ENCODE measurements at regions of chr4 and their contacts with region 1.

Region 1: GRCh38 chr4:107757864-107758476 is 37.9 kb upstream of the PAPSS1 start:
- DNase-seq: no peak
- ATAC-seq: peak in 1 of 8 donors; percentile 42
- H3K4me3 ChIP-seq: no peak overlapping the region
- H3K27ac ChIP-seq: no peak overlapping the region
- H3K4me1 ChIP-seq: peaks cover 0 to 10% (median 0%) of the 10 kb centered on the region in 9 donors
- H3K27me3 ChIP-seq: no peaks in the 10 kb centered on the region
- CTCF ChIP-seq: peak in 8 of 9 donors; percentile 42 to 75 (median 58)

Region 2: DNA sequence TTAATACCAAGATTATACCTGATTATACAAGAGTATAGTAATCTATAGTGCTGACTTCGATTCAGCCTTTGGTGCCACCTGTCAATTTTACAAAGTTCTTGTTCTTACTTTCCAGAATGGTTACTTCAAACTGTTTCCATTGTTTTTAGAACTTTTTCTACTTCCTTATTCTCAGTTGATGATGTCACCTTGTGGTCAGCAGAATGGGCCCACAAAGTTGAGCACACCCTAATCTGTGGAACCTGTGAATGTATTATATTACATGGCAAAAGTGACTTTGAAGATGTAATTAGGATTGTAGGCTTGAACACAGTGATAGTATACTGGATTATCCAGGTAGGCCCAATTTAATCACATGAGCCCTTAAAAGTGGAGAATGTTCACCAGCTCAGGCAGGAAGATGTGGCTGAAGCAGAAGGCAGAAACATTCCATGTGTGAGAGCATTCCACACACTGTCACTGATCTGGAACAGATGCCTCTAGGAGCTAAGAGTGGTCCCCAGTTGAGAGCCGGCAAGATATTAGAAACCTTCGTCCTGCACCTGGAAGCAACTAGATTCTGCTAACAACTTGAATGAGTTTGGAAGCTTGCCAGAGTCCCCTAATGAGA is 60.4 kb after region 1 on chr4:
- intact Hi-C with region 1: loop called in 3 of 10 experiments (anchors 5 kb)
- DNase-seq: no peak
- ATAC-seq: no peak
- H3K4me3 ChIP-seq: no peak overlapping the region
- H3K27ac ChIP-seq: no peak overlapping the region
- H3K4me1 ChIP-seq: peaks cover 0 to 14% (median 0%) of the 10 kb centered on the region in 9 donors
- H3K27me3 ChIP-seq: no peaks in the 10 kb centered on the region
- CTCF ChIP-seq: no peak

Region 3: GRCh38 chr4:107876099-107876498 is 118.1 kb after region 1 on chr4:
- intact Hi-C with region 1: no loop called
- DNase-seq: no peak
- ATAC-seq: no peak
- H3K4me3 ChIP-seq: no peak overlapping the region
- H3K27ac ChIP-seq: no peak overlapping the region
- H3K4me1 ChIP-seq: peaks cover 0 to 10% (median 5%) of the 10 kb centered on the region in 9 donors
- H3K27me3 ChIP-seq: no peaks in the 10 kb centered on the region
- CTCF ChIP-seq: no peak

Region 4: DNA sequence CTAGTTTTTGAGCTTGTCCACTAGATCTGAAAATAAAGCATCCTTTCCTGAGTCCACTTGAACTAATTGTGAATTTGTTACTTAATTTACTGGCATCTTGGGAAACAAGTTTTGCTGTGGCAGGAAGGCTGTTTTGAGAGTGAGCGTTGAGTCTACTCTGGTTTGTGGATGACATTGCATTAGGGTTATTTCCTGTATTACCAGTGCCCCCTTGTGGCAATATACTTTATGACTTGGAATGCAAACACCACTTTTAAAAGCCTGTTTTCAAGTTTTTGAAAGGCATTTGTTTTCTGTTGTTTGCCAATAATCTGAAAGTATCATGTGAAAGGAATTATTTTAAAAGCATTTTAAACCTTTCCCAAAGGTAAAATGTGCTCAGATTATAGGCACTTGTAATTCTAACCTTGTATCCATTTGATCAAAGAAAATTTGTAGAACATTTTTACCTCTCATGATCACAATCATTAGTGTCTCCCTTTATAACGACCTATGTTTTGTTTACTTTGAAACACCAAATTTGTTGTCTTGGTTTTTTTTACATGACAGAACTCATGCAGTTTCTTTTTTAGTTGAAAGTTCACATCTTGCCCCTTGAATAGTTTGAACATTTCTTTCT is 155.4 kb after region 1 on chr4:
- intact Hi-C with region 1: loop called (anchors 1 to 5 kb)
- DNase-seq: peak in 1 of 2 donors; percentile 67
- ATAC-seq: peak in 7 of 8 donors; percentile 55 to 83 (median 76)
- H3K4me3 ChIP-seq: no peak overlapping the region
- H3K27ac ChIP-seq: no peak overlapping the region
- H3K4me1 ChIP-seq: peaks cover 0 to 4% (median 0%) of the 10 kb centered on the region in 9 donors
- H3K27me3 ChIP-seq: no peaks in the 10 kb centered on the region
- CTCF ChIP-seq: peak; percentile 58 to 92 (median 79)